Activated naive CD4-positive, alpha-beta T cell treated with anti-CD3 and anti-CD28 coated beads, Interleukin-2, amount 10 ng/mL, durations not matched to agents 7 days and 5 days (primary cell): ENCODE measurements at regions of chr5 and their contacts with region 1.

Region 1: GRCh38 chr5:142769741-142770631 is at the start of gene ARHGAP26:
- DNase-seq: peak; percentile 96
- H3K4me3 Mint-ChIP-seq: peak within 1 kb of the TSS; percentile 93
- H3K27ac Mint-ChIP-seq: peak within 1 kb of the TSS; percentile 88
- H3K4me1 Mint-ChIP-seq: peaks cover 34% of the 10 kb centered on the region
- H3K27me3 Mint-ChIP-seq: no peaks in the 10 kb centered on the region

Region 2: DNA sequence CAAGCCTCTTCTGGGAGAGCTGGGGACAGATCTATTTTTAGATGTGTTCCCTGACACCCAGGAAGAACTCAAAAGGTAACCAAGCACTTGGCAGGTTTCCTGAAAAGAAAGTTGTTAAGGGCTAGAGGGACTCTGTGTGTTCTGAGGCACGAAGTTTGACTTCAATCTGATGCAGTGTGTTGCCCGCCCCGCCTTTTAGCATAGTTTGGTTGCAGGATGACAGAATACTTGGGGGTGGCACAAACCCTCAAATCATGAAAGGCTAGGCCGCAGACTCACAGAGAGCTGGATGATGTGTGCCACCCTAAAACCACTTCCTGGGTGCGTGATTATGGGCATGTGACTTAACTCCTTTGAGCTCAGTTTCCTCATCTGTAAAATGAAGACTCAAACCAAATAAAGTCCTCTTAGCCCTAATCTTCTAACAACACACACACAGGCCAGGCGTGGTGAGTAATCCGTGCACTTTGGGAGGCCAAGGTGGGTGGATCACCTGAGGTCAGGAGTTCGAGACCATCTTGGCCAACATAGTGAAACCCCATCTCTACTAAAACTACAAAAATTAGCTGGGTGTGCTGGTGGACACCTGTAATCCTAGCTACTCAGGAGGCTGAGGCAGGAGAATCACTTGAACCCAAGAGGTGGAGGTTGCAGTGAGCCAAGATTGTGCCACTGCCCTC is 674.2 kb before region 1 on chr5:
- CTCF ChIA-PET with region 1: no interaction called
- DNase-seq: peak; percentile 88
- H3K4me3 Mint-ChIP-seq: peak overlapping the region; percentile 9
- H3K27ac Mint-ChIP-seq: peak overlapping the region; percentile 91
- H3K4me1 Mint-ChIP-seq: peaks cover 55% of the 10 kb centered on the region
- H3K27me3 Mint-ChIP-seq: no peaks in the 10 kb centered on the region

Region 3: DNA sequence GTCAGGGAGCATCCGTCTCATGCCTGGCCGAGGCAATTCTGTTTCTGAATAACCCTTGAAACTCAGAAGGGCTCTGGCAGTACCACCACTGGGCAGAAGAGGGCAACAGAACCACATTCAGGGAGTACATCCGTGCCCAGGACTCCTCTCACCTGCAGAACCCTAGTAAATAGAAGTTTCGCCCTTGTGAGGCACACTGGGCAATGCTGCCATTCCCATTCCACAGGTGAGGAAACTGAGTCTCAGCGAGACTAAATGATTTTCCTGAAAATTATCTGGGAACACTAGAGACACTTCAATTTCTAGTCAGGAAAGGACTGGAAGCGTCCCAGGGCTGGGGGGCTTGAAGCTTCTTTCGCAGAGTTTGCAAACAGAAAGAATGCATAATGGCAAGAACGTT is 158.8 kb before region 1 on chr5:
- CTCF ChIA-PET with region 1: no interaction called
- DNase-seq: peak; percentile 80
- H3K4me3 Mint-ChIP-seq: no peak overlapping the region
- H3K27ac Mint-ChIP-seq: no peak overlapping the region
- H3K4me1 Mint-ChIP-seq: no peaks in the 10 kb centered on the region
- H3K27me3 Mint-ChIP-seq: peaks cover 16% of the 10 kb centered on the region

Region 4: DNA sequence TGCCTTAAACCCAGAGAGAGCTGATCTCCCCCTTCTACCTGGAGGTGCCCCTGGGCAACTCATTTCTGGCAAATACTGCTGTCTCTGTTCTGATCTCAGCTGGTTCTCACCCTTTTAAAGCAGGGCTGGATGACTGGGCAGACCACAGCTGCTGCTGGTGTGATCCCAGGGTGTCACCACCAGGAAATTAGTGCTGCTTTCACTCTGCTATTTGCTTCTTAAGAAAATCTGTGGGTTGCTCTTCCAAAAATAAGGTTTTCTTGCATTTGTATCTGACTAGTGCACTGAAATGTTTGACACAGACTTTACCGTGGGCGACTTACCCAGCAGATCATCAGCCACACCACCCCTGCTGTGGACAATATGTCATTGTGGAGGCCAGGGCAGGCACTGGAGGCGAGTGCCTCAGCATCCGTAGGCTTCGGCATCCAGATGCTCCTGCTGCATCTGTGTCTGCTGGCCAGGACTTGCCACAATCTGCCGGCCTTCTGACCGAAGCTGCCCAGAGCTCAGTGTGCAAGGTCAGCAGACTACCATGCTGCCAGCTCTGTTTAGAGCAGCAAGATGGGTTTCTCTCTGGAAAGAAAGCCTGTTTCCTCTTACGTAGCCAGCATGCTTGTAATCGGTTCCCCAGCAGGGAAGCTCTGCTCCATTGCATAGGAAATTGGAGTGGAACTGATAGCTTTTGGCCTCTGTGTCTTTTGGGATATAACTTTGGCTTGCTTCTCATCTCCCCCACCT is 13.8 kb after region 1 on chr5:
- CTCF ChIA-PET with region 1: interaction called, 27 read pairs
- DNase-seq: peak; percentile 41
- H3K4me3 Mint-ChIP-seq: no peak overlapping the region
- H3K27ac Mint-ChIP-seq: peak overlapping the region; percentile 35
- H3K4me1 Mint-ChIP-seq: peaks cover 51% of the 10 kb centered on the region
- H3K27me3 Mint-ChIP-seq: no peaks in the 10 kb centered on the region

Region 5: GRCh38 chr5:142800776-142801494 is 30.9 kb after region 1 on chr5:
- CTCF ChIA-PET with region 1: interaction called, 27 read pairs
- DNase-seq: peak; percentile 72
- H3K4me3 Mint-ChIP-seq: peak overlapping the region; percentile 41
- H3K27ac Mint-ChIP-seq: peak overlapping the region; percentile 98
- H3K4me1 Mint-ChIP-seq: peaks cover 64% of the 10 kb centered on the region
- H3K27me3 Mint-ChIP-seq: no peaks in the 10 kb centered on the region

Region 6: GRCh38 chr5:142821733-142822487 is 51.9 kb after region 1 on chr5:
- CTCF ChIA-PET with region 1: interaction called, 12 read pairs
- DNase-seq: no peak
- H3K4me3 Mint-ChIP-seq: no peak overlapping the region
- H3K27ac Mint-ChIP-seq: peak overlapping the region; percentile 35
- H3K4me1 Mint-ChIP-seq: peaks cover 27% of the 10 kb centered on the region
- H3K27me3 Mint-ChIP-seq: no peaks in the 10 kb centered on the region

Region 7: DNA sequence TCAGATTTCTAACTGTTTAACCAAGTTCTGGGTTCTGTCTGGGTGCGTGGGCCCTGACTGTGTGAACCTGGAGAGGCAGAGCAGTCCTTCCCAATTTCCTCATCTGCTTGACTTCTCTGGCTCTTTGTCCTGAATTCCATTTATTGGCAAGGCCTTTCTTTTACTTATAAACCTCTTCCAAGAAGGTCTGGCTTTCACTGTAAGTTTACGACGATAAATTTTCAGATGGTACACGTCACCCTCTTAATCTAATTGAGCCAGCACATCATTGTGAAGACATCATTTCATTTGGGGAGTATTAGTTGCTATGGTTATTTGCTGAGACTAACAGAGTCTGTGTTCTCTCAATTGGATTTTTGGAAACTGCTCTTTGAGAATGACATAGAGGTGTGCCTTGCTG is 92.6 kb after region 1 on chr5:
- CTCF ChIA-PET with region 1: interaction called, 41 read pairs
- DNase-seq: no peak
- H3K4me3 Mint-ChIP-seq: no peak overlapping the region
- H3K27ac Mint-ChIP-seq: no peak overlapping the region
- H3K4me1 Mint-ChIP-seq: peaks cover 25% of the 10 kb centered on the region
- H3K27me3 Mint-ChIP-seq: no peaks in the 10 kb centered on the region

Region 8: DNA sequence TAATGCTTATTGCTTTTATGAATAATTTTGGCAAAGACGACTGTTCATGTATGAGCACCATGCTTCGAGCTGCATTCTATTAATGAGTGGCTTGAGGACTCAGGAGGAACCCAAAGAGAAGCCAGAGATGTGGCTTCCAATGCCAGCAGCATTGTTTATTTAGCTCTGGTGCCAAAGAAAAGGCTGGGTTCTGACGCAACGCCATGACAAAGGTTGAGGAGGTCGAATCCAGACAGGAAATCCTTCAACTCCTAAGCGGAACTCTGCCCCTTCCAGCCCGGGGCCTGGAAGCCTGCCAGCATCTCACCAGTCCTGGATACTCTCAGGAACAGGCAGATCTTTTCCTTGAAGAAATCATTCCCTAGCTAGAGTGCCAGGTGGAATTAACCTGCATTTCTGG is 104.6 kb after region 1 on chr5:
- CTCF ChIA-PET with region 1: interaction called, 41 read pairs
- DNase-seq: no peak
- H3K4me3 Mint-ChIP-seq: no peak overlapping the region
- H3K27ac Mint-ChIP-seq: no peak overlapping the region
- H3K4me1 Mint-ChIP-seq: no peaks in the 10 kb centered on the region
- H3K27me3 Mint-ChIP-seq: no peaks in the 10 kb centered on the region